Sigmoid colon (tissue), 7 donors: ENCODE measurements at regions of chr1 and their contacts with region 1.

Region 1: GRCh38 chr1:36099681-36100341 is 11.1 kb downstream of the ADPRS start:
- DNase-seq: peak; percentile 86
- H3K4me3 ChIP-seq: no peak overlapping the region
- H3K27ac ChIP-seq: peak overlapping the region in 1 of 4 donors; percentile 18
- H3K4me1 ChIP-seq: peaks cover 0 to 9% (median 7%) of the 10 kb centered on the region in 4 donors
- H3K27me3 ChIP-seq: no peaks in the 10 kb centered on the region
- CTCF ChIP-seq: peak; percentile 79 to 88 (median 84)
- EP300 ChIP-seq: no peak
- POLR2A ChIP-seq: no peak

Region 2: GRCh38 chr1:36134505-36135329 is 34.9 kb after region 1 on chr1:
- intact Hi-C with region 1: loop called (anchors 1 kb)
- DNase-seq: no peak
- H3K4me3 ChIP-seq: no peak overlapping the region
- H3K27ac ChIP-seq: peak overlapping the region; percentile 65 to 82 (median 78)
- H3K4me1 ChIP-seq: peaks cover 0 to 54% (median 48%) of the 10 kb centered on the region in 4 donors
- H3K27me3 ChIP-seq: no peaks in the 10 kb centered on the region
- CTCF ChIP-seq: peak; percentile 51 to 67 (median 58)
- EP300 ChIP-seq: no peak
- POLR2A ChIP-seq: no peak

Region 3: DNA sequence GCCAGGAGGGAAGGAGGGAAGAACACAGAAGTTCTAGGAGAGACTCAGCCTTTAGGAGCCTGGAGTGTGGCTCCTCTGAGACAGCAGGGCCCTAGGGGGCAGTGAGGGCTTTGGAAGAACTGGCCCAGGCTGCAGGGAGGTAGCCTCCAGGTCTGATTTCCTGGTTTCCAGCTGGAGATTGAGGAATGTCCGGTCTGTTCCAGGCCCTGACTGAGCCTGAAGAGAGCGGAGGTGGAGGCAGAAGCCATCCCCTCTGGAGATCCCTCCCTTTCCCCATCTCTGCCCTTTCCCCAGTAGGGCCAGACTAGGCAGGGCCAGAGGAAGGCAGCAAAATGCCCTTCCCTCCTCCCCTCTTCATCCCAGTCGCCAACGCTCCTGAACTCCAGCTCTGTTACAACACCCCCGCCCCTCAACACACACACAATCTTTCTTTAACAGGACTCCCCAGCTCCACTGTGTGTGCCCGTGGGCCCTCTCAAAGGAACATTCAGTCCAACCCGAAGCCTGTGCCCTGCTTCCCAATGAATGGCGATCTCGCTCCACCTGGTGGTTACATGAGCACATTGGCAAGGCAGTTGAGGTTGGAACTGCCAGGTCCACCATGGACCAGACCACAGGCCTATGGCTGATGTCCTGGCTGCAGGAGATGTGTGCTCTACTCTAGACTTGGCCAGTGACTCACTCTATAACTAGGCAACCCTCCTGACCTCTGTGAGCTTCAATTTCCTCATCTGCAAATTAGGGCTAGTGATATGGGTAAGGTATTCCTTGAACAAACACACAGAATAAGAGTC is 88.2 kb after region 1 on chr1:
- intact Hi-C with region 1: loop called (anchors 2 kb)
- DNase-seq: peak; percentile 96
- H3K4me3 ChIP-seq: no peak overlapping the region
- H3K27ac ChIP-seq: peak overlapping the region; percentile 87 to 100 (median 94)
- H3K4me1 ChIP-seq: peaks cover 0 to 28% (median 26%) of the 10 kb centered on the region in 4 donors
- H3K27me3 ChIP-seq: no peaks in the 10 kb centered on the region
- CTCF ChIP-seq: peak; percentile 79 to 98 (median 95)
- EP300 ChIP-seq: no peak
- POLR2A ChIP-seq: no peak

Region 4: DNA sequence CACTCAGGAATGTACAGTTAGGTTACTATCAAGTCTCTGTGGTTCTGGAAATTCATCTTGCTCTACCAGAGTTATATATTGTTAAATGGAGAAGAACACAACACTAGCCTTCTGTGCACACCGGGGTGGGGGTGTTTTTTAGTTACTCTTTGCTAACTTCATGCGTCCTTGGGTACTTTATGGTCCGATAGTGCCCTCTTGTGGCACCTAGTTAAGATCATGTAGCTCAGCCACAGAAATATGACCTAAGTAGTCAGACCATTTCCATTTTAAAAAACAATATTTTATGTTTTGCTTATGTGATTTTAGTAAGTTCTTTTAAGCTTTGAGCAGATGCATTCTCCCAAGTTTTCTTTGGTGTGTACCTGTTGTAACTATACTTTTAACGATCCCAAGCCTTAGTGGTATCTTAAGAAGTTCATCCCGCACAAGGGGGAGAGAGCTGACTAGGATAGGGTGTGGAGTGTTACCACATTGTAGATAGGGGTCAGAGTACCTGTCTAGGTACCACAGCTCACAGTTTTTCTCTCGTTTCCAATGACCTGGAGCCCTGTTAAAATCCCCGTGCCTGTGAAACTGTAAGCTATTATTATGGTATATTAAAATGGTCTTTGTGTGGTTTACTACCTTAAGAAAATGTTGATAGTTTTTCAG is 185.8 kb after region 1 on chr1:
- intact Hi-C with region 1: loop called (anchors 5 kb)
- DNase-seq: peak; percentile 82
- H3K4me3 ChIP-seq: no peak overlapping the region
- H3K27ac ChIP-seq: peak overlapping the region; percentile 20 to 71 (median 52)
- H3K4me1 ChIP-seq: peaks cover 0 to 53% (median 24%) of the 10 kb centered on the region in 4 donors
- H3K27me3 ChIP-seq: no peaks in the 10 kb centered on the region
- CTCF ChIP-seq: peak; percentile 56 to 70 (median 58)
- EP300 ChIP-seq: no peak
- POLR2A ChIP-seq: no peak

Region 5: GRCh38 chr1:36420836-36421664 is 321.2 kb after region 1 on chr1:
- intact Hi-C with region 1: loop called (anchors 1 kb)
- DNase-seq: peak; percentile 92
- H3K4me3 ChIP-seq: no peak overlapping the region
- H3K27ac ChIP-seq: peak overlapping the region in 1 of 4 donors; percentile 38
- H3K4me1 ChIP-seq: peaks cover 0 to 7% (median 5%) of the 10 kb centered on the region in 4 donors
- H3K27me3 ChIP-seq: no peaks in the 10 kb centered on the region
- CTCF ChIP-seq: peak; percentile 88 to 94 (median 92)
- EP300 ChIP-seq: no peak
- POLR2A ChIP-seq: no peak